ENCODE measurements at regions of chr7 and their contacts with region 1.

Region 1: DNA sequence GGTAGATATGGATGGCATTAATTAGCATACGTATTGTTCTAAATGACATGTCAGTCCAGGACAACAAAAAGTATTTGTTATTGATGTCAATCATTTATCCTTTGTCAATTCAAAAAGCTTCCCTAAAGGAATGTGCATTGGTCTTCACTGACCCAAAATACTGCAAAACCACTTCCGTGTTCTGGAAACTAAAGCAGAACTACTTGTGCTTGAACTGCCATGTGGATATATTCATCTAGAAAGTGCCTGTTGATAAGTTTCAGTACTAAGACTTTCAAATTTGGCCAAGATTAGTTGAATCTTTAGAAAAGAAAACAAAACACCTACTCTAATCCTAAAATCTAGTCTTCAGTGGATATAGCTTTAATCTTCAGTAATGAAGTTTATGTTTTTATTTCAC is 242.1 kb upstream of the PPP1R3A start:
- DNase-seq: no peak
- H3K4me3 ChIP-seq: no peak overlapping the region
- H3K27ac ChIP-seq: no peak overlapping the region
- H3K4me1 ChIP-seq: no peaks in the 10 kb centered on the region
- H3K27me3 ChIP-seq: no peaks in the 10 kb centered on the region
- CTCF ChIP-seq: no peak
- EP300 ChIP-seq: no peak
- POLR2A ChIP-seq: no peak

Region 2: DNA sequence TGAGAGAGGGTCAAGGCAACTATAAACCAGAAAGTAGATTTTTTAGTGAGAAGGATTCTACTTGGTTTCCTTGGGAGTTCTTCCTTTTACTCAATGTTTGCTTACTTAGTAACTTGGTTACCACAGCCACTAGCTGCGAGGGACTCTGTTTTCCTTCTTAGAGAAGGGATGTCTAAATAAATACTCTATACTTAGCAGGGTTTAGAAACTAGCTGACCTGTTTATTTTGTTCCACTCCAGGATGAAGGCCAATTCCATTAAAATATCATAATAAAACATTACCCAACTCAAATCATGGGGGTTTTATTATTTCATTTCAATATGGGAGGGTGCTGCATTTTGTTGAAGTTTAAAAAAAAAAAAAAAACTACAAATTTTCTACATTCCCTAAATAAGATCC is 329.4 kb before region 1 on chr7:
- in situ Hi-C with region 1: no loop called
- intact Hi-C with region 1: no loop called
- DNase-seq: no peak
- H3K4me3 ChIP-seq: no peak overlapping the region
- H3K27ac ChIP-seq: peak overlapping the region in 2 of 4 donors; percentile 9 to 58
- H3K4me1 ChIP-seq: no peaks in the 10 kb centered on the region
- H3K27me3 ChIP-seq: no peaks in the 10 kb centered on the region
- CTCF ChIP-seq: no peak
- EP300 ChIP-seq: no peak
- POLR2A ChIP-seq: no peak

Region 3: GRCh38 chr7:114148779-114149178 is 12.1 kb before region 1 on chr7:
- in situ Hi-C with region 1: no loop called
- intact Hi-C with region 1: loop called (anchors 2 kb)
- DNase-seq: no peak
- H3K4me3 ChIP-seq: no peak overlapping the region
- H3K27ac ChIP-seq: no peak overlapping the region
- H3K4me1 ChIP-seq: peaks cover 2 to 17% (median 3%) of the 10 kb centered on the region in 4 donors
- H3K27me3 ChIP-seq: no peaks in the 10 kb centered on the region
- CTCF ChIP-seq: no peak
- EP300 ChIP-seq: no peak
- POLR2A ChIP-seq: no peak

Region 4: GRCh38 chr7:114175125-114175524 is 14.2 kb after region 1 on chr7:
- in situ Hi-C with region 1: no loop called
- intact Hi-C with region 1: no loop called
- DNase-seq: no peak
- H3K4me3 ChIP-seq: no peak overlapping the region
- H3K27ac ChIP-seq: no peak overlapping the region
- H3K4me1 ChIP-seq: no peaks in the 10 kb centered on the region
- H3K27me3 ChIP-seq: no peaks in the 10 kb centered on the region
- CTCF ChIP-seq: no peak
- EP300 ChIP-seq: no peak
- POLR2A ChIP-seq: no peak